ENCODE measurements at regions of chr21 and their contacts with region 1.

Region 1: GRCh38 chr21:36337099-36337509 is 17.1 kb downstream of the MORC3 start:
- DNase-seq: peak; percentile 76
- H3K4me3 Mint-ChIP-seq: peak overlapping the region; percentile 64
- H3K27ac Mint-ChIP-seq: peak overlapping the region; percentile 100
- H3K4me1 Mint-ChIP-seq: peaks cover 18% of the 10 kb centered on the region
- H3K27me3 Mint-ChIP-seq: no peaks in the 10 kb centered on the region
- CTCF ChIP-seq: no peak

Region 2: DNA sequence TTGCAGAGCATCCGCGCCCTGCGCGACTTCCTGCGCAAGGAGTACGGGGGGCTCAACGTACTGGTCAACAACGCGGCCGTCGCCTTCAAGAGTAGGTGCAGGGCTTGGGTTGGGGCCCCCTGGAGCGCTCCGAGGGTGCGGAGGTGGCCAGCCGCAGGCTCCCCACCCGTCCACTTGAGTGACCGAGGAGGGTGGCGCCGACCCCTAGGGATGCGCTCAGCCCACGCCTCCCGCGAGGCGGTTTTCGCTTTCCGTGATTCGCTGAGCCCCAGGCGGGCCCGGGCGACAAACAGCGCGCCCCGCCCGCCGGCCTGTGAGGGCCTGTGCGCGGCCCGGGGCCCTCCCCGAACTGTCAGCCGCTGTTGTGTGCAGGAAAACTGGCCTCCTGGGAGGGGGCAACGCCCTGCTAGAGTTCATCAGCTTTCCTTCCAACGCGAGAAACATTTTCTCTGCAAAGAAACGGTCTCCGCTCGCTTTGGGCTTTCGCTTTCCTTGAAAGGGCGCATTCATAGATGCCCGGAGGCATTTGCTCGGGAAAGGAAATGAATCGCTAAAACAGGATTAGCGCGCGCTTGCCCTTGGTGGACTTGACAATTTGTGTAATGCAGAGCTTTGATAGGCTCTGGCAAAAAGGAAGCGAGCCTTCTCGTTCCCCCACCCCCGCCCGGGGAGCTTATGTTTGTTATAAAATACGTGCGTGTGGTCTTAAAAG is 201.6 kb before region 1 on chr21:
- CTCF ChIA-PET with region 1: no interaction called
- POLR2A ChIA-PET with region 1: interaction called, 10 read pairs
- intact Hi-C with region 1: no loop called
- DNase-seq: peak; percentile 81
- H3K4me3 Mint-ChIP-seq: peak overlapping the region; percentile 75
- H3K27ac Mint-ChIP-seq: no peak overlapping the region
- H3K4me1 Mint-ChIP-seq: no peaks in the 10 kb centered on the region
- H3K27me3 Mint-ChIP-seq: no peaks in the 10 kb centered on the region
- CTCF ChIP-seq: no peak

Region 3: DNA sequence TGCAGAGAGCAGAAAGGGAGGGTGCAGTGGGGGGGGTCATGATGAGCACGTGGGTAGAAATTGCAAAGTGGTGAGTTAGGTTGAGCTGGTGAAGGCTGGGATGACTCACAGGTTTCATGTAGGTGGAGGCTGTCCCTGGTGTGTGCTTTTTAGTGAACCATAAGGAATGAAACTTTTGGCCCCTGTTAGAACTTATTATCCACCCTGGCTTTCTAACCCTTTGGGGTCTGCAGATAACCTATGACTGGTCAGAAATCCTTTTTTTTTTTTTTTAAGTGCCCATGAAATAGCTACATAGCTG is 133.5 kb before region 1 on chr21:
- CTCF ChIA-PET with region 1: interaction called, 14 read pairs
- POLR2A ChIA-PET with region 1: interaction called, 19 read pairs
- intact Hi-C with region 1: no loop called
- DNase-seq: peak; percentile 85
- H3K4me3 Mint-ChIP-seq: no peak overlapping the region
- H3K27ac Mint-ChIP-seq: peak overlapping the region; percentile 41
- H3K4me1 Mint-ChIP-seq: peaks cover 19% of the 10 kb centered on the region
- H3K27me3 Mint-ChIP-seq: no peaks in the 10 kb centered on the region
- CTCF ChIP-seq: no peak

Region 4: DNA sequence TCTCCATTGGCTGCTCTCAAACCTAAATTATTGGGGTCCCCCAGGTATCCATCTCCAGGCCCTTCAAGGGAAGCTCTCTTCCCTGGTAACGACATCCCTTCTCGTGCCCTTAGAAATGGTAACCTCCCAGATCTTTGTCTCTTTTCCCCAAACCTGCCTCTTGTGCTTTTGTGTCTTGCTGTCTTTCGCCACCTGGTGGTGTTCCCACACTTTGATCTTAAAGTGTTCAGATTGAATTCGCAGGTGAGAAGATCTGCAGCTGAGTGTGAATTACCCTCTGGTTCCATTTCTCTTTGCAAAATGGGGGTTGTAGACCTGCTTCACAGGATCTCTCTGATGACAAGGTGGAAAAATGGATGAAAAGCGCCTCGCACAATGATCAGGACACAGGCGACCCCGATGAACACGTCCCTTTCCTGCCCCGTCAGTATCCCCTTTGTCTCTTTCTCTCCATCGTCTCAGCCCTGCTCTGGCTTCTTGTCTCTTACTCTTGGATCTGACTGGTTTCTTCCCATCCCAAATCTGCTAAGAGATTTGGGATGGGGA is 127.4 kb before region 1 on chr21:
- CTCF ChIA-PET with region 1: interaction called, 14 read pairs
- POLR2A ChIA-PET with region 1: interaction called, 15 read pairs
- intact Hi-C with region 1: no loop called
- DNase-seq: peak; percentile 86
- H3K4me3 Mint-ChIP-seq: peak overlapping the region; percentile 61
- H3K27ac Mint-ChIP-seq: peak overlapping the region; percentile 80
- H3K4me1 Mint-ChIP-seq: peaks cover 16% of the 10 kb centered on the region
- H3K27me3 Mint-ChIP-seq: no peaks in the 10 kb centered on the region
- CTCF ChIP-seq: peak; percentile 50

Region 5: GRCh38 chr21:36254106-36254941 is 82.8 kb before region 1 on chr21:
- CTCF ChIA-PET with region 1: no interaction called
- POLR2A ChIA-PET with region 1: no interaction called
- intact Hi-C with region 1: no loop called
- DNase-seq: no peak
- H3K4me3 Mint-ChIP-seq: no peak overlapping the region
- H3K27ac Mint-ChIP-seq: peak overlapping the region; percentile 31
- H3K4me1 Mint-ChIP-seq: no peaks in the 10 kb centered on the region
- H3K27me3 Mint-ChIP-seq: no peaks in the 10 kb centered on the region
- CTCF ChIP-seq: no peak

Region 6: DNA sequence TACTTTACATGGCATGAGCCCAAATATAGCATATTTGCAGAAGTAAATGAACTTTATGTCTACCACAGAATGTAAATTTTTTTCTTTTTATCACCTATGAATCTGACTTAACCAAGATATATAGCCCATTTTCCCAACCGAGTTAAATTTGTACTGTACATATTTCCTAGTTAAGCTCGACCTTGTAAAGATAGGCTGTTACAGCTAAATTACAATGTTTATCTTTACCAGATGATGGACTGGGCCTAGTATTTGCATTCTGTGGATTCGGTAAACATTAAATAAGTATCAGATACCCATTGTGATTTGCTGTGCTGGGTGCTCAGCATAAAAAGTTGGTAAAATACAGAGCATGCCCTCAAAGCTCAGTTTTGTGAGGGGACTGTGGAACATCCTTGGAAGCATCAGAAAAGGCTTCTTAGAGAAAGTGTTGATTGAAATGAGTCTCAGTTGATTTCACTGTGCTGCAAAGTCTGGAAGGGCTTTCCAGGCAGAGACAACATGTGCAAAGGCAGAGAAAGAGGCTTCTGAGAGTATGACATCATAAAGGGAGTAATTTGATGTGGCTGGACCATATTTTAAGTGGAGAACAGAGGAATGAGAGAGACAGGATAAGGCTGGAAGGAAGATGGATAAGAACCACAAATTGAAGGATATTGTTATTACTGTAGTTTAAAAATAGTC is 10.3 kb after region 1 on chr21:
- CTCF ChIA-PET with region 1: interaction called, 4 read pairs
- POLR2A ChIA-PET with region 1: interaction called, 10 read pairs
- intact Hi-C with region 1: no loop called
- DNase-seq: no peak
- H3K4me3 Mint-ChIP-seq: no peak overlapping the region
- H3K27ac Mint-ChIP-seq: no peak overlapping the region
- H3K4me1 Mint-ChIP-seq: peaks cover 6% of the 10 kb centered on the region
- H3K27me3 Mint-ChIP-seq: no peaks in the 10 kb centered on the region
- CTCF ChIP-seq: no peak

Region 7: GRCh38 chr21:36450511-36450910 is 113.4 kb after region 1 on chr21:
- CTCF ChIA-PET with region 1: no interaction called
- POLR2A ChIA-PET with region 1: no interaction called
- intact Hi-C with region 1: no loop called
- DNase-seq: no peak
- H3K4me3 Mint-ChIP-seq: no peak overlapping the region
- H3K27ac Mint-ChIP-seq: no peak overlapping the region
- H3K4me1 Mint-ChIP-seq: peaks cover 4% of the 10 kb centered on the region
- H3K27me3 Mint-ChIP-seq: no peaks in the 10 kb centered on the region
- CTCF ChIP-seq: no peak

Region 8: GRCh38 chr21:36676039-36676950 is 339.2 kb after region 1 on chr21:
- CTCF ChIA-PET with region 1: no interaction called
- POLR2A ChIA-PET with region 1: no interaction called
- intact Hi-C with region 1: no loop called
- DNase-seq: no peak
- H3K4me3 Mint-ChIP-seq: no peak overlapping the region
- H3K27ac Mint-ChIP-seq: no peak overlapping the region
- H3K4me1 Mint-ChIP-seq: peaks cover 15% of the 10 kb centered on the region
- H3K27me3 Mint-ChIP-seq: no peaks in the 10 kb centered on the region
- CTCF ChIP-seq: no peak

Measured in MCF 10A (cell line).